Cardiac septum (tissue), 1 donor: ENCODE measurements at regions of chr7 and their contacts with region 1.

Region 1: GRCh38 chr7:134016223-134016941 is 110.8 kb upstream of the LRGUK start:
- DNase-seq: no peak

Region 2: DNA sequence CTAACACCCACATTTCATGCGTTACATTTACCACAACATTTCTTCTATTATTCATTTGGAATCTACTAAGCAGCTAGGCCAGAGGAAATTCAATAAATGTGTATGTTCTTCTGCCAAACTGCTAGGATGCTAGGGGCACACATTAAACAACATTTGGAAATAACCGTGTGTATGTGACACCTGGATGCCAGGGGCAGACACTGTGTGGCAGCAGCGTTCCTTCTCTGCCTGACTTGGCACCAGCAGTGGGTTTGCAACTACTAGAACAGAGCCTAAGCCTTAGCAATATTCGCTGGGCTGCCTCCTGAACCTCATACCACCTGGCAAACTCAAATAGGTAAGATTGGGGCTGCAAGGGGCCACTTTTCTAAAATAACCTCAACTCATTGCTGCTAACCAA is 1116.5 kb before region 1 on chr7:
- intact Hi-C with region 1: loop called (anchors 10 kb)
- DNase-seq: no peak

Region 3: DNA sequence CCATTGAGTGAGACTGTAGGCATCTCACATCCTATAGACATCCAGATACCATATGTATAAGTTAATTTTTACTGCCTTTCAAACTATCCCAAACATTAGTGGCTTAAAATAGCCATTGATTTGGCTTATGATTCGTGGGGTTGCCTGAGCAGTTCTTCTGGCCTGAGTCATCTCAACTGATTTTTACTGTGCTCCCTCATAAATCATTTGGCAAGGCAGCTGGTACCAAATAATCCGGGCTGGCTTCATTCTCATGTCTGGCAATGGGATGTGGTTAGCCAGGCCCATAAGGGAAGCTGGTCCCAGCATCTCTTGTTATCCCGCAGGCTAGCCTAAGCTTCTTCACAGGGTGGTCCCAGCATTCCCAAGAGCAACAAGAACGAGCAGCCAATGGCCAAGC is 104.0 kb after region 1 on chr7:
- intact Hi-C with region 1: no loop called
- DNase-seq: no peak